Aorta (tissue), 5 donors: ENCODE measurements at regions of chr18 and their contacts with region 1.

Region 1: DNA sequence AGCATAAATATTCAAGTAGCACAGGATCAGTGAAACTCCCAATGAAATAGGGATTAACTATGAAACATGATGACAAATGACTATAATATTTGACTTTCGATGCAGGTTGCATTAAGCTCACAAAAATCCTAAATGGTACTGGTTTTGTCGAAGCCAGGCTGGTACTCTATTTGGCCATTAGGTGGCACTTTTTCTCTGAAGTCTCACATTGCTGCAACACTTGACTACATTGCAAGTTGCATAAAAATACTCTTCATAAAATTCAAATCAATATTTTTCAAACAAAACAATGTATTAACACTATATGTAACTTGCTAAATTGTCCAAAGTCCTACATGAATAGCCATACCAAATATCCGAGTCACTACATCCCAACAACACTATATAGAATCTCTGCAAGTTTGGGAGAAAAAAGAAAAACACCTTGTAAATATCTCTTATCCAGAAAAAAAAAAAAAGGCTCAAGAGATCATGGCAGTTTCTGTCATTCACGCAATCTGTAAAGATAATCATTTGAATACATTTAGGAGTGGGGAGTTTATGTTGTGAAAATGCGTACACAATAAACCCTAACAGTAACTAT is 9.5 kb downstream of the RTTN start:
- DNase-seq: no peak
- ATAC-seq: no peak
- H3K4me3 ChIP-seq: no peak overlapping the region
- H3K27ac ChIP-seq: no peak overlapping the region
- H3K4me1 ChIP-seq: no peaks in the 10 kb centered on the region
- H3K27me3 ChIP-seq: no peaks in the 10 kb centered on the region

Region 2: DNA sequence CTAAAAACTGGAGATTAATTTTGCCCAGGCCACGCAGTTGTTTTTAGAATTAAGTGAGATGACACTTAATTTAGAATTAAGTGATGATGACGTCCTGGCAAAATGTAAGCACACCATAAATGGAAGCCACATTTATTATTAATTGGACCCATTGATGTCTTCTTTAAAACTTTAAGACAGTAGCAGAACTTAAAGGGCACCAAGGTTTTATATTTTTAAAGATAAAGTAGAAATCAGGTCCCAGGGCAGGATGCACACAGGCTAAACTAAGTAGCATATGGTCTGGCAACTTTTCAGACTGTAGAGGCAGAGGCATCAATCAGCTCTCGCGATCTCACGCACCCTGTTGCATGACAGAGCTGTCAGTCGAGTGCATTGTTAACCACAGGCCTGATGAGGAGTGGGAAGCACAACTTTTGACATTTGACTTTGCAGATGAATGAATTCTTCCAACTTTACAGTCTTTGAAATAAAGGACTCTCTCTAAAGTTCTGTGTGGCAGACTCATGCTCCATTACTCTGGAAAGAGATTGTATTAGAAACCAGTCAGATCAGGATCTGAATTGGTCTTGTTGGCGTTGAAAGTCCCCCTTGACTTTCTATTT is 480.6 kb before region 1 on chr18:
- intact Hi-C with region 1: no loop called
- DNase-seq: no peak
- ATAC-seq: no peak
- H3K4me3 ChIP-seq: no peak overlapping the region
- H3K27ac ChIP-seq: no peak overlapping the region
- H3K4me1 ChIP-seq: no peaks in the 10 kb centered on the region
- H3K27me3 ChIP-seq: no peaks in the 10 kb centered on the region

Region 3: GRCh38 chr18:70249118-70249517 is 53.2 kb after region 1 on chr18:
- intact Hi-C with region 1: no loop called
- DNase-seq: no peak
- ATAC-seq: no peak
- H3K4me3 ChIP-seq: no peak overlapping the region
- H3K27ac ChIP-seq: no peak overlapping the region
- H3K4me1 ChIP-seq: peaks cover 0 to 2% of the 10 kb centered on the region in 2 donors
- H3K27me3 ChIP-seq: no peaks in the 10 kb centered on the region

Region 4: DNA sequence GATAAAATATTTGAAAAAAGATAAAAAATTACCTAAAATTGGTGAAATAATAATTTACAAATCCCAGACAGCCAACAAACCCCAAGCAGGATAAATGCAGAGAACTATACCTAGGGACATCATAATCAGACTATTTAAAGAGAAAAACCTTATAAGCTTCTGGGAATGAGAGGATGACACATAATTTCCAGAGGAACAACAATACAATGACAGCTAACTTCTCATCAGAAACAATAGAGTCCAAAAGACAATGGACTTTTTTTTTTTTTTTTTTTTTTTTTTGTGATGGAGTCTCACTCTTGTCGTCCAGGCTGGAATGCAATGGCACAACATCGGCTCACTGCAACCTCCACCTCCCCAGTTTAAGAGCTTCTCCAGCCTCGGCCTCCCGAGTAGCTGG is 158.1 kb after region 1 on chr18:
- intact Hi-C with region 1: no loop called
- DNase-seq: no peak
- ATAC-seq: no peak
- H3K4me3 ChIP-seq: no peak overlapping the region
- H3K27ac ChIP-seq: no peak overlapping the region
- H3K4me1 ChIP-seq: no peaks in the 10 kb centered on the region
- H3K27me3 ChIP-seq: no peaks in the 10 kb centered on the region

Region 5: DNA sequence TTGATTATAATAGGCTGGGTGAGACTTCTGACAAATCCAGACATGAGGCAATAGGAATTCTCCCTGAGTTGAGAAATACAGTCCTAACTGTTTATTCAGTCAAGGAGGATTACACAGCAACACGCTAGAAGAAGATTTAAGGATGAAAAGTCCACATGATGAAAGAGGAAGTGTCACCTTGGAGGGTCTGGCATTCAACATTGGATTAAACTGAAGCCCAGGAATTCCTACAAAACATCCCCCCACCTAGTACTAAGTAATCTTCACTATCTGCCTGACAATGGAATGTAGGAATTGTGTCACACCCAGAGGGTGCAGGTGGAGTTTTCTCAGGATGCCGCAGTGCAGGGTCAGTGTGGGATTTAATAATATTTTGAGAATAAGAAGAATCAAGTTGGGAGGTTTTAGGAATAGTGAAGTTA is 235.3 kb after region 1 on chr18:
- intact Hi-C with region 1: loop called (anchors 2 kb)
- DNase-seq: no peak
- ATAC-seq: no peak
- H3K4me3 ChIP-seq: no peak overlapping the region
- H3K27ac ChIP-seq: no peak overlapping the region
- H3K4me1 ChIP-seq: no peaks in the 10 kb centered on the region
- H3K27me3 ChIP-seq: no peaks in the 10 kb centered on the region

Region 6: DNA sequence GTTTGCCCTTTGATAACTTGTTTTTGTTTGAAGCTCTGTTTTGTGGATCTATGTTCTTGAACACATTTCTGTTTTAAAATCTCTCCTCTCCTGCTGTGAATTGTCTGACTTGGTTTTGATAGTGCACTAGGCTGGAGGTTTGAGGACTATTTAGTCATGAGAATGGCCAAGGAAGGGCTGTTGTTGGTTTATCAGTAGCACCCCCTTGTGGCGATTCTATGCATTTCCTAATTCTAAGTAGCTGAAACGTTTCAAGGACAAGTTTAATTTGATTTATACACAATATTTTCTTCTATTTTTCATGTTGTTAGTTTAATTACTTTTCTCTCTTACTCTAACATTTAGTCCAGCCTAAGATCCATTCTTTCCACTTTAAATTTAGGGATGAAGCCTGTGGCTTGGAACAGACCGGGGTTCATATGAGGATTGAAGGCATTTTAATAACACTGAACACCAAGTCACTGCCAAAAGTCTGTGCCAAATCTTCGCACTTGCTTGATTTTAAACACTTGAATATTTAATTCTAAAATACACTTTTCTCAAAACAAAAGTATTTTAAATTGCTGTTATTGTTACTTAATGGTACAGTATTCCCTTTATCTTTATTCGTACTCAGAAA is 258.9 kb after region 1 on chr18:
- intact Hi-C with region 1: loop called in 1 of 2 experiments (anchors 5 kb)
- DNase-seq: no peak
- ATAC-seq: no peak
- H3K4me3 ChIP-seq: no peak overlapping the region
- H3K27ac ChIP-seq: no peak overlapping the region
- H3K4me1 ChIP-seq: no peaks in the 10 kb centered on the region
- H3K27me3 ChIP-seq: no peaks in the 10 kb centered on the region

Region 7: DNA sequence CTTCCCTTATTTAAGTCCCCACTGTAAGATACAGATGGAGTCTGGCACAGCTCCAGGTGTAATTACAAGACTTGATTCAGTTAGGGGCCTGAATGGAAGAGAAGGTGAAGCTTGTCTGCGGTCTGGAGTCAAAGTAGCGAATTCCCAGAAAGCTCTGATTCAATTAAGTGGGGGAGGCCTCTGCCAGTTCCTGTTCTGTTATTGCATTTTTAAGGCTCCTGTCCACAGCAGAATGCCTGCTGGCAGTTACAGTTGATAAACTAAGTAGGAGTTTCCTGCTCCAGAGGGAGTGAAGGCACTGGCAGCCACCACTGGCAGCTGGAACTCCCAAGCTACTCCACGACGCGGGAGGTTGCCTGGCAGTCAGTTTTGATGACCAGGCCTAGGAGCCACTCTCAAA is 274.0 kb after region 1 on chr18:
- intact Hi-C with region 1: no loop called
- DNase-seq: no peak
- ATAC-seq: no peak
- H3K4me3 ChIP-seq: no peak overlapping the region
- H3K27ac ChIP-seq: no peak overlapping the region
- H3K4me1 ChIP-seq: no peaks in the 10 kb centered on the region
- H3K27me3 ChIP-seq: no peaks in the 10 kb centered on the region